Naive thymus-derived CD4-positive, alpha-beta T cell (primary cell): ENCODE measurements at regions of chr12 and their contacts with region 1.

Region 1: DNA sequence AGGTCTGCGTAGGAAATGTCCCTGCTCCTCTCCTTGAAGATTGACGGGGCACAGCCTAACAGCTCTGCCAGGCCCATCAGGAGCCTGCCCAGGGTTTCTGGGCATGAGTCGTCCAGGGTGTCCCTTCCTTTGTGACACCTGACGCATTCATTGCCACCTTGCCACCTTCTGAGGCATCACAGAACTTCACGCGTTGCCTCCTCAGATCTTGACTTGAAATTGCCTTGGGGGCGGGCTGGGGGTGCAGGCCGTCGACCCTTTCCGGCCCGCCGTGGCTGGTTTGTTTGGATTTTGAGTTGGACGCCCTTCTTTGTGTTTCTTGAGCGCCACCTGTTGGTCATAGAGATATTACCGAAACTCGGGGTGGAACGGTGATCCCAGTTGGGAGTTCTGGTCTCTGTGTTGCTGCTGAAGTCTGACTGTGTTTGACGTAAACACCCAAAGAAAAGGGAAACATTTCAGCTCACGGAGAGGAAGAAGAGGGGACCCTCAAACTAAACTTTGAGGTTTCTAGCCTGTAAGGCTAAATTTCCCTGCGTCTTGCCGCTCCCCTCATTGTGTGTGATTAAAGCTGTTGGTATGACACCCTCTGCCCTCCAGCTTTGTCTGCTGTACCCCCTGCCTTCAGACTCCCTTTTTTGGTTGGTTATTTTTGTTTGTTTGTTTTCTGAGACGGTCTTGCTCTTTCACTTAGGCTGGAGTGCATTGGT is 44.6 kb downstream of the MLXIP start:
- DNase-seq: peak; percentile 52 to 82 (median 68)
- ATAC-seq: peak; percentile 73
- H3K4me3 ChIP-seq: no peak overlapping the region
- H3K4me3 Mint-ChIP-seq: peak overlapping the region; percentile 26 to 80 (median 59)
- H3K27ac ChIP-seq: peak overlapping the region; percentile 23
- H3K27ac Mint-ChIP-seq: peak overlapping the region; percentile 25 to 94 (median 80)
- H3K4me1 ChIP-seq: peaks cover 7 to 8% of the 10 kb centered on the region in 2 donors
- H3K4me1 Mint-ChIP-seq: peaks cover 30 to 51% (median 45%) of the 10 kb centered on the region in 7 donors
- H3K27me3 ChIP-seq: no peaks in the 10 kb centered on the region
- H3K27me3 Mint-ChIP-seq: no peaks in the 10 kb centered on the region

Region 2: GRCh38 chr12:122051231-122051876 is 71.9 kb before region 1 on chr12:
- CTCF ChIA-PET with region 1: interaction called, 64 read pairs
- POLR2A ChIA-PET with region 1: interaction called, 4 read pairs
- intact Hi-C with region 1: loop called (anchors 1 kb)
- DNase-seq: no peak
- ATAC-seq: no peak
- H3K4me3 ChIP-seq: no peak overlapping the region
- H3K4me3 Mint-ChIP-seq: no peak overlapping the region
- H3K27ac ChIP-seq: no peak overlapping the region
- H3K27ac Mint-ChIP-seq: no peak overlapping the region
- H3K4me1 ChIP-seq: no peaks in the 10 kb centered on the region
- H3K4me1 Mint-ChIP-seq: peaks cover 0 to 7% (median 5%) of the 10 kb centered on the region in 7 donors
- H3K27me3 ChIP-seq: no peaks in the 10 kb centered on the region
- H3K27me3 Mint-ChIP-seq: no peaks in the 10 kb centered on the region

Region 3: DNA sequence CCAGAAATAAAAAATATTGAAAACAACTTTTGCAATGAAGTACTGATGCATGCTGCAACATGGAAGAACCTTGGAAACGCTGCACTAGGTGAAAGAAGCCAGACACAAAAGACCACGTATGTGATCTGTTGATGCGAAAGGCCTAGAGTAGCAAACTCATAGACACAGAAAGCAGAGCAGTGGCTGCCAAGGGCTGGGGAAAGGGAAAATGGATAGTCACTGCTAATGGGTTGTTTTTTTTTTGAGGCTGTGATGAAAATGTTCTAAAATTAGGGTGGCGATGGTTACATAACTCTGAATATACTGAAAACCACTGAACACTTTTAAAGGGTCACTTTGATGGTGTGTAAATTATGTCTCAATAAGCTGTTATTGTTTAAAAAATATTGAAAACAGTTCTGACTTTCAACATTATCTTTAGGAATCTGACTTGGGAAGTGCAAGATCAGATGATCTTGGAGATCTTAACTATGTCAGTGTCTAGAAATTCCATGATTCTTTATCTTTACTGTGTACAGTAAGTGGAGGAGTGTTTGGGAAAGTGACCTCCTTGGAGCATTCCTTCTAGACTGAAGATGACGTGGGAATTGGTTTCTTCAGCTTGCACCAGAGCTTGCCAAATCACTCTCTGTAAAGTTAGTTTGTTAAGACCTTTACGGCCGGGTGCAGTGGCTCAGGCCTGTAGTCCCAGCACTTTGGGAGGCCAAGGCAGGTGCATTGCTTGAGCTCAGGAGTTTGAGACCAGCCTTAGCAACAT is 32.3 kb before region 1 on chr12:
- CTCF ChIA-PET with region 1: interaction called, 15 read pairs
- POLR2A ChIA-PET with region 1: interaction called, 3 read pairs
- intact Hi-C with region 1: no loop called
- DNase-seq: no peak
- ATAC-seq: no peak
- H3K4me3 ChIP-seq: no peak overlapping the region
- H3K4me3 Mint-ChIP-seq: peak overlapping the region in 5 of 10 donors; percentile 30 to 78 (median 63)
- H3K27ac ChIP-seq: no peak overlapping the region
- H3K27ac Mint-ChIP-seq: peak overlapping the region in 3 of 9 donors; percentile 16 to 89 (median 72)
- H3K4me1 ChIP-seq: peaks cover 7 to 88% of the 10 kb centered on the region in 2 donors
- H3K4me1 Mint-ChIP-seq: peaks cover under 1 to 59% (median 28%) of the 10 kb centered on the region in 7 donors
- H3K27me3 ChIP-seq: no peaks in the 10 kb centered on the region
- H3K27me3 Mint-ChIP-seq: no peaks in the 10 kb centered on the region

Region 4: DNA sequence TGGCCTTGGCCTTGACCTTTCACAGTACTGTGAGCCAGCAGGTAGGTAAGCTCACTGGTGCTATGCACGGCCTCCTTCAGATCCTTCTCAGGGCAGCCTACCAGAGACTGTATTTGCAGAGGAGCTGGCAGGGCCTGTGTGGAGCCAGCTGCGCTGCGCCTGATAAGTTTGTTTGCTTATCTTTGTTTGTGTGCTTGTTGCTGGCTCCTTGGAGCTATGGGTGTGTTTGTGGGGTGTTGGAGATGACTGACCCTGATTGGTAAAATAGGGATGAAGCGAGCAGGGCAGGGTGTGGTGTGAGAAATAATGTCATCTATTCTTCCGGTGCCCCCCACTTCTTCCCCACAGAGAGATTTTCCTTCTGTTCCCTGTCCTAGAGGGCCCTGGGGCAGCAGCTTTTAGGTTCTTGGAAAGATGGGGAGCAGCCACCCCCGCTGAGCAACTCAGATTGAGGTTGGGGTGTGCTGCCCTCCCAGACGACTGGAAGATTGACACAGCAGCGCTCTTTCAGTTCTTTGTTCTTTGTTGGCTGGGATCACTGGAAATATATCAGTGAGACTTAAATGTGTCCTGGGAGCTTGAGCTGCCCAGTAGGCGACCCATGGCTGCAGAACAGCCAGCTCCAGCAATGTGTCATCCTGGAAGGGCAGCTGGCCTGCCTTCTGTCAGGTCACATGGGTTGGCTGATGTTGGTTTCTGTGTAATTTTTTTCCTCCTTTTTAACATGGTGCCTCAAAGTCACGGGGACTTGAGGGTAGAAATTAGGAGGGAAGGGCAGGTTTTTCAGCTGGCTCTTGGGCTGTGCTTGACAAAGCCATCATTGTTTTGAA is 25.1 kb before region 1 on chr12:
- CTCF ChIA-PET with region 1: interaction called, 13 read pairs
- POLR2A ChIA-PET with region 1: interaction called, 4 read pairs
- intact Hi-C with region 1: no loop called
- DNase-seq: no peak
- ATAC-seq: peak; percentile 28
- H3K4me3 ChIP-seq: no peak overlapping the region
- H3K4me3 Mint-ChIP-seq: peak overlapping the region in 9 of 10 donors; percentile 66 to 83 (median 76)
- H3K27ac ChIP-seq: peak overlapping the region; percentile 62
- H3K27ac Mint-ChIP-seq: peak overlapping the region in 7 of 9 donors; percentile 62 to 98 (median 94)
- H3K4me1 ChIP-seq: peaks cover 25 to 77% of the 10 kb centered on the region in 2 donors
- H3K4me1 Mint-ChIP-seq: peaks cover 49 to 73% (median 66%) of the 10 kb centered on the region in 7 donors
- H3K27me3 ChIP-seq: no peaks in the 10 kb centered on the region
- H3K27me3 Mint-ChIP-seq: no peaks in the 10 kb centered on the region

Region 5: DNA sequence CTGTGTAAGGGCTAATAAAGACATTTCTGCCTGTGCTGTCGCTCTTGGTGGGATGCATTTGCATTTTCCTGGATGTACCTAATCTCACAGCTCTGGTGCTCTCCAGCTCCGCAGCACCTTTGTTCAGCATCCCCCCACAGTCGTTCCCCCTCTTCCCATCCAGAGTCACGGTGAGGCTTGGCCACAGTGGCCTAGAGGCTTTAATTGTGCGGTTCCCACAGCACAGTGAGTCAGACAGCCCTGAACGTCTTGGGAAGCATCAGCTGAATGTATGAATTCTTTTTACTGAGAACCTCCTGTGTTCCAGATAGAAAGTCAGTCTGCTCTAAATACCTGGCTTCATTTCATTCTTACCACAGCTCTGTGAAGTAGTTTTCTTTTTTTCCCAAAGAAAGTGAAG is 15.9 kb before region 1 on chr12:
- CTCF ChIA-PET with region 1: interaction called, 11 read pairs
- POLR2A ChIA-PET with region 1: interaction called, 6 read pairs
- intact Hi-C with region 1: loop called in 1 of 2 experiments (anchors 2 kb)
- DNase-seq: no peak
- ATAC-seq: no peak
- H3K4me3 ChIP-seq: no peak overlapping the region
- H3K4me3 Mint-ChIP-seq: peak overlapping the region in 7 of 10 donors; percentile 13 to 68 (median 38)
- H3K27ac ChIP-seq: no peak overlapping the region
- H3K27ac Mint-ChIP-seq: peak overlapping the region in 5 of 9 donors; percentile 79 to 93 (median 88)
- H3K4me1 ChIP-seq: peaks cover 14 to 44% of the 10 kb centered on the region in 2 donors
- H3K4me1 Mint-ChIP-seq: peaks cover 58 to 88% (median 79%) of the 10 kb centered on the region in 7 donors
- H3K27me3 ChIP-seq: no peaks in the 10 kb centered on the region
- H3K27me3 Mint-ChIP-seq: no peaks in the 10 kb centered on the region

Region 6: DNA sequence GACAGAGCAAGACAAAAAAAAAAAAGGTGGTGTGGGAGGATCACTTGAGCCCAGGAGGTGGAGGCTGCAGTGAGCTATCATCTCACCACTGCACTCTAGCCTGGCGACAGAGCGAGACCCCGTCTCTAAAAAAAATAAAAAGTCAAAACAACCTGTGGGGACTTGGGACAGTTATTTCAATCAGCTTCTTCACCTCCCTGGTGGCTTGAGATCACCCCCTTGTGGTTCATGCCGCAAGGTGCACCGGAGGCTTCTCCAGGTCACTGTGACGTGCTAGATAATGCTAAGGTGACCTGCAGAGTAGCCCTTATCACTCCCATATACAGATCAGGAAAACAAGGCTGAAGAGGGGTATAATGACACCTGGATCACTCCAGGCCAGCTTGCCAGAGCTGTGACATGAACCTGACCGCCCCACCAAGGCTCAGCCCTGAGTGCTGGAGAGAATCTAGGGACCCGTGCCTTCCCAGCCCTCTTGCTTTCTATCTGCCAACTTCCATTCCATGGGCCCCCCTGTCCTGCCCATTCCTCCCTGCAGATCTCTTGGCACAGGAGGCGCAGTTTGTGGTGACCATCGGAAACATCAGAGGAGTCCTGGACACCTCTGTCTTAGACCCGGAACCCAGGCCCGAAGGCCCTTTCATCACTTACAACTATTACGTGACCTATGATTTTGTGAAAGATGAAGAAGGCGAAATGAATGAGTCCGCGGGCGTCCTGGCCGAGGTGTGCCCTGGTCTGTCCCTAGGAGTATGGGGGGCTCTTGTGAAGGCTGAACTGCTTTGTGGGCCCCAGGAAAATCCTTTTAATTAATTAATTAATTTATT is 67.8 kb after region 1 on chr12:
- CTCF ChIA-PET with region 1: no interaction called
- POLR2A ChIA-PET with region 1: no interaction called
- intact Hi-C with region 1: loop called in 1 of 2 experiments (anchors 2 kb)
- DNase-seq: peak in 8 of 9 donors; percentile 29 to 70 (median 55)
- ATAC-seq: peak; percentile 89
- H3K4me3 ChIP-seq: no peak overlapping the region
- H3K4me3 Mint-ChIP-seq: no peak overlapping the region
- H3K27ac ChIP-seq: no peak overlapping the region
- H3K27ac Mint-ChIP-seq: no peak overlapping the region
- H3K4me1 ChIP-seq: no peaks in the 10 kb centered on the region
- H3K4me1 Mint-ChIP-seq: peaks cover 0 to 6% (median 0%) of the 10 kb centered on the region in 7 donors
- H3K27me3 ChIP-seq: no peaks in the 10 kb centered on the region
- H3K27me3 Mint-ChIP-seq: peaks cover 0 to 12% (median 0%) of the 10 kb centered on the region in 5 donors

Region 7: GRCh38 chr12:122238861-122239260 is 115.7 kb after region 1 on chr12:
- CTCF ChIA-PET with region 1: no interaction called
- POLR2A ChIA-PET with region 1: no interaction called
- intact Hi-C with region 1: no loop called
- DNase-seq: no peak
- ATAC-seq: no peak
- H3K4me3 ChIP-seq: no peak overlapping the region
- H3K4me3 Mint-ChIP-seq: no peak overlapping the region
- H3K27ac ChIP-seq: no peak overlapping the region
- H3K27ac Mint-ChIP-seq: peak overlapping the region in 1 of 9 donors; percentile 22
- H3K4me1 ChIP-seq: peaks cover 6 to 21% of the 10 kb centered on the region in 2 donors
- H3K4me1 Mint-ChIP-seq: peaks cover 0 to 12% (median 9%) of the 10 kb centered on the region in 7 donors
- H3K27me3 ChIP-seq: no peaks in the 10 kb centered on the region
- H3K27me3 Mint-ChIP-seq: no peaks in the 10 kb centered on the region